ENCODE measurements at regions of chr11 and their contacts with region 1.

Region 1: GRCh38 chr11:92329646-92330045 is 105.0 kb downstream of the FAT3 start:
- DNase-seq: peak; percentile 38
- ATAC-seq: peak; percentile 49
- H3K4me3 ChIP-seq: no peak overlapping the region
- H3K27ac ChIP-seq: no peak overlapping the region
- H3K4me1 ChIP-seq: no peaks in the 10 kb centered on the region; the same call in 1 of the 2 replicates
- H3K27me3 ChIP-seq: no peaks in the 10 kb centered on the region
- CTCF ChIP-seq: no peak
- POLR2A ChIP-seq: no peak
- RAD21 ChIP-seq: no peak

Region 2: GRCh38 chr11:91972665-91973266 is 356.9 kb before region 1 on chr11:
- CTCF ChIA-PET with region 1: no interaction called
- POLR2A ChIA-PET with region 1: no interaction called
- dilution Hi-C with region 1: no loop called
- in situ Hi-C with region 1: no loop called
- intact Hi-C with region 1: no loop called
- DNase-seq: no peak
- ATAC-seq: no peak
- H3K4me3 ChIP-seq: no peak overlapping the region
- H3K27ac ChIP-seq: no peak overlapping the region
- H3K4me1 ChIP-seq: no peaks in the 10 kb centered on the region
- H3K27me3 ChIP-seq: no peaks in the 10 kb centered on the region
- CTCF ChIP-seq: no peak
- POLR2A ChIP-seq: no peak
- RAD21 ChIP-seq: no peak

Region 3: GRCh38 chr11:92253945-92254344 is 75.7 kb before region 1 on chr11:
- CTCF ChIA-PET with region 1: no interaction called
- POLR2A ChIA-PET with region 1: no interaction called
- dilution Hi-C with region 1: no loop called
- in situ Hi-C with region 1: no loop called
- intact Hi-C with region 1: loop called (anchors 5 kb)
- DNase-seq: no peak
- ATAC-seq: no peak
- H3K4me3 ChIP-seq: no peak overlapping the region
- H3K27ac ChIP-seq: no peak overlapping the region
- H3K4me1 ChIP-seq: peaks cover 6% of the 10 kb centered on the region
- H3K27me3 ChIP-seq: no peaks in the 10 kb centered on the region; the same call in 1 of the 2 replicates
- CTCF ChIP-seq: no peak
- POLR2A ChIP-seq: no peak
- RAD21 ChIP-seq: no peak

Region 4: DNA sequence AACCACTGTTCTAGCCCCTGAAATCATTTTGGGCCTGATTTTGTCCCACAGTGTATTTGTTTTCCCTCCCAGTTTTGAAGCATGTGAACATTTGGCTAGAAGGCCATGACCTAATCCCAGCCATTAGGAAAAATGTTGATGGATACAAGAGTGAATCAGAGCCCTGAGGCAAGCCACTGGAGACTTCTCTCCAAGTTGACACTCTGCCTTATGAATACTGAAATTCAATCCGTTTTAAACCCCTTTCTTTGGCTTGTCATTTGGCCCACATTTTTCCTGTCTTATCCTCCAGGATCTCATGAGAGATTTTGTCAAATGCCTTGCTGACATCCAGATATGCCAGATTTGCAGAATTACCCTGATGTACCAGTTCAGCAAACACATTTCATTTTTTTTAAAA is 53.8 kb after region 1 on chr11:
- CTCF ChIA-PET with region 1: no interaction called
- POLR2A ChIA-PET with region 1: no interaction called
- dilution Hi-C with region 1: no loop called
- in situ Hi-C with region 1: no loop called
- intact Hi-C with region 1: loop called (anchors 5 kb)
- DNase-seq: peak; percentile 54
- ATAC-seq: peak; percentile 65
- H3K4me3 ChIP-seq: no peak overlapping the region
- H3K27ac ChIP-seq: no peak overlapping the region
- H3K4me1 ChIP-seq: peaks cover 2% of the 10 kb centered on the region
- H3K27me3 ChIP-seq: no peaks in the 10 kb centered on the region
- CTCF ChIP-seq: no peak
- POLR2A ChIP-seq: no peak
- RAD21 ChIP-seq: no peak

Measured in IMR-90 (cell line).